Motor neuron (in vitro differentiated cells): ENCODE measurements at regions of chr2 and their contacts with region 1.

Region 1: GRCh38 chr2:54838585-54839035 is 115.1 kb downstream of the EML6 start:
- ATAC-seq: peak; percentile 23 to 91 (median 40)
- H3K4me3 ChIP-seq: no peak overlapping the region
- H3K27ac ChIP-seq: no peak overlapping the region
- H3K4me1 ChIP-seq: peaks cover 14 to 22% of the 10 kb centered on the region in 2 donors

Region 2: GRCh38 chr2:54716375-54716774 is 122.2 kb before region 1 on chr2:
- in situ Hi-C with region 1: loop called in 1 of 9 experiments (anchors 10 kb)
- ATAC-seq: no peak
- H3K4me3 ChIP-seq: no peak overlapping the region
- H3K27ac ChIP-seq: no peak overlapping the region
- H3K4me1 ChIP-seq: no peaks in the 10 kb centered on the region

Region 3: GRCh38 chr2:55099878-55100820 is 261.5 kb after region 1 on chr2:
- in situ Hi-C with region 1: no loop called
- ATAC-seq: peak; percentile 19 to 72 (median 45)
- H3K4me3 ChIP-seq: no peak overlapping the region
- H3K27ac ChIP-seq: peak overlapping the region; percentile 28 to 43
- H3K4me1 ChIP-seq: peaks cover 29 to 30% of the 10 kb centered on the region in 2 donors